ENCODE measurements at regions of chr21 and their contacts with region 1.

Region 1: GRCh38 chr21:37366482-37367316 is at the start of gene DYRK1A:
- DNase-seq: peak; percentile 98 to 100
- ATAC-seq: peak; percentile 92 to 98 (median 96)
- H3K4me3 ChIP-seq: peak within 1 kb of the TSS; percentile 74 to 98 (median 90)
- H3K27ac ChIP-seq: peak within 1 kb of the TSS; percentile 98 to 100 (median 100)
- H3K4me1 ChIP-seq: peaks cover 4 to 47% (median 43%) of the 10 kb centered on the region in 9 donors
- H3K27me3 ChIP-seq: no peaks in the 10 kb centered on the region
- CTCF ChIP-seq: peak in 1 of 9 donors; percentile 24
- total RNA-seq, gene DYRK1A: 57.6 to 94.2 (median 75.0) TPM

Region 2: DNA sequence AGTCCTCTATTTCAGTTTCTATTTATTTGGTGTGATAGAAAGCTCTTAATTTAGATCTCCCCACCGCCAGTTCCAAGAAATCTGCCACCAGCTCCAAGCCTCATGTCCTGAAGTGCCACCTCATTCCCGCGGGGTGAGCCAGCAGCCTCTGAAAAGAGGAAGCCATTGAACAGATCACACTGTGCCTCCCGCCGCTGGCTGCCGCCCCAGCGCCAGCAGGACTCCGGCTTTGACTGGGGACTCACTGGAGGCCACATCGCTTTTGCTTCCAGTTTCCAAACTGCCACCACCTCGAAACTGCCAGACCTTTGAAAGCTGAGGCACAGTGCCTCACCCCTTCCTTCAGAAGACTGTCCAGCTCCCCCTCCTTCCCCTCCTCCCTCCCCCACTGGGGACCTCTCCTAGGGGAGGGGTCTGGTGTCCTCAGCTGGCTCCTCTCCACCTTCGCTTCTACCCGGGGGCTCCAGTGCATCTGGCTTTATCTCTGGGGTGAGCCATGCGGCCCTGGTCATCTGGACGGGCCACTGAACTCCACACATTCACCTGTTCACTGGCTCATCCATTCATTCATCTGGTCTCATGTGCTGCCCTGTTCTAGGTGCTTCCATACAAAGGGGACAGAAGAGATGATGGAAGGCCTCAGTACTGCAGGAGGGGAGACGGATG is 158.5 kb before region 1 on chr21:
- intact Hi-C with region 1: loop called in 1 of 10 experiments (anchors 5 kb)
- DNase-seq: peak; percentile 79 to 84
- ATAC-seq: peak; percentile 84 to 96 (median 92)
- H3K4me3 ChIP-seq: peak overlapping the region in 7 of 10 donors; percentile 6 to 42 (median 25)
- H3K27ac ChIP-seq: peak overlapping the region; percentile 65 to 96 (median 88)
- H3K4me1 ChIP-seq: peaks cover 7 to 45% (median 23%) of the 10 kb centered on the region in 9 donors
- H3K27me3 ChIP-seq: no peaks in the 10 kb centered on the region
- CTCF ChIP-seq: no peak

Region 3: DNA sequence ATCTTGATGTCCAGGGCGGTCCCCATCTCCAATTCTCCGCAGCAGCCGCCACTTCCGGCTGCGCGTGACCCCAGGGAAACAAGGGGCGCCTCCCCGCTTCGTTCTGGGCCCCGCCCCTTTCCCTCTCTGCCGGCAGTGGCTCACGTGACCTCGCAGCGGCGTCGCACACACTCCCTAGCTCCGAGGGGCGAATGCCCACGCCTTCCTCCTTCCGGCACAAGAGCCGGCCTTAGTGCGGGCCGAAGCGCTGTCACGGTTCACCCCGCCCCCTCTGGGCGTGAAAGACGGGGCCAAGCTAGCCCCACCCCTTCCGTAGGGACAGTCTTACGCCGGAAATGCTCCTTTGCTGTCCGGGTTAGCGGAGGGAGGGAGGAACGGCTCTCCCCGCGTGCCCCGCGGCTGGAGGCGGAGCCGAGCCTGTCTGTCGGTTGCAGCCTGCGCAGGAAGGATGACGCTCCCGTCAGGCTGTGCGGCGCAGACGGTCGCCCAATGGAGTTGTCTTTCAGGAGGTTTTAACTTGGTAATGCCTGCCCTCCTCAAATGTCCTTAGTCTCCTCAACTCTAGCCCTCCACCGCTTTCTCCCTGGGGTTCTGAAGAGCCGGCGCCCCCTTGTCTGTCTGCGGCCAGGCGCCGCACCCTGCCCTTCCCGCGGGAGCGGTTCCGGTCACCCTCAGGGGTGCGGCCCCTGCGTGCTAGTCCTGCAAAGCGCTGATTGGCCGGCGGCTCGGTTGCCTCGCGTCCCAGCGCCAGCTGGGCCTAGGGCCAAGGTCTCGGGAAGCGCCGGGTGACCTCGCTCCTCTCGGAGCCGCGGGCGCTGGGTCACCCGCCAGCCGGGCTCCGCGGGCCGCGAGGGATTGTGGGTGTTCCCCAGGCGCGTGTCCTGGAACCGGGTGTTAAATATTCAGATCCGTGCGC is 99.2 kb before region 1 on chr21 and contains the start of gene VPS26C:
- intact Hi-C with region 1: loop called in 9 of 10 experiments (anchors 1 to 10 kb)
- DNase-seq: peak; percentile 98
- ATAC-seq: peak; percentile 94 to 98 (median 96)
- H3K4me3 ChIP-seq: peak within 1 kb of the TSS; percentile 59 to 93 (median 89)
- H3K27ac ChIP-seq: peak within 1 kb of the TSS; percentile 95 to 99 (median 97)
- H3K4me1 ChIP-seq: peaks cover 5 to 46% (median 35%) of the 10 kb centered on the region in 9 donors
- H3K27me3 ChIP-seq: no peaks in the 10 kb centered on the region
- CTCF ChIP-seq: no peak
- total RNA-seq, gene VPS26C: 37.6 to 57.5 (median 47.0) TPM

Region 4: GRCh38 chr21:37319551-37319950 is 47.1 kb before region 1 on chr21:
- intact Hi-C with region 1: no loop called
- DNase-seq: no peak
- ATAC-seq: no peak
- H3K4me3 ChIP-seq: no peak overlapping the region
- H3K27ac ChIP-seq: no peak overlapping the region
- H3K4me1 ChIP-seq: no peaks in the 10 kb centered on the region
- H3K27me3 ChIP-seq: no peaks in the 10 kb centered on the region
- CTCF ChIP-seq: no peak

Region 5: DNA sequence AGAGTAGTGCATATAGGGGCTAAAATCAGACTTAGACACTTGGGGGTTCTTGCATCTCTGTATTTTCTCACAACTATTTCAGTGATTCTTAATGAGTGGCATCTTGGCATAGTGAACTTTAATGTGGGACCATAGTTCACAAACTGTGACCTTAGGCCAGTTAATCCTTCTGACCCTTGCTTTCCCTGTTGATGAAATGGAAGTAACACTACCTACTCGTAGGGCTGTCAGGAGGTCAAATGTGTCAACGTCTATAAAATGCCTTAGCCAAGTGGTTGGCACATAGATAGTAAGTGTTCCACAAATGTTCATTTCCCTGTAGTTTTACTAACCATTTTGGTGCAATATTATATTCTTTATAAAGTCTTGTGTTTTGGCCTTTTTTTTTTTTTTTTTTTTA is 49.2 kb after region 1 on chr21:
- intact Hi-C with region 1: loop called in 1 of 10 experiments (anchors 5 kb)
- DNase-seq: no peak
- ATAC-seq: peak in 3 of 8 donors; percentile 33 to 51 (median 43)
- H3K4me3 ChIP-seq: no peak overlapping the region
- H3K27ac ChIP-seq: peak overlapping the region in 4 of 10 donors; percentile 15 to 62 (median 28)
- H3K4me1 ChIP-seq: peaks cover 16 to 100% (median 93%) of the 10 kb centered on the region in 9 donors
- H3K27me3 ChIP-seq: no peaks in the 10 kb centered on the region
- CTCF ChIP-seq: no peak

Region 6: DNA sequence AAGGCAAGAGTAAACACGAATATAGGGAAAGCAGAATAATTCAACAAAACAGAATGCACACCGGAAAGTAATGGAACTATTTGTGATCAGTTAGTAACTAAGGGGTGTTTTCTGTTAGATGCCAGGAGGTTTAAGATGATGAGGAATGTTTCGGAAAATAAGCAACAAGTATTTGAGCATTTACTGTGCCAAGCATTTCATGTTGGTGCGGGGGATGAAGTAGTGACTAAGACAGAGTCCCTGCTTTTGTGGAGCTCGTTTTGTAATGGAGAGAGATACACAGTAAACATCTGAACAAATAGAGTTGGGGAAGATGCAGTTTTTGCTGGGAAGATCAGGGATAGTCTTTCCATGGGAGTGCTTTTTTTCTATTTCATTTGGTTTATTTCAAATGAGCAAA is 78.5 kb after region 1 on chr21:
- intact Hi-C with region 1: loop called in 4 of 10 experiments (anchors 5 to 10 kb)
- DNase-seq: no peak
- ATAC-seq: peak in 3 of 8 donors; percentile 29 to 68 (median 36)
- H3K4me3 ChIP-seq: no peak overlapping the region
- H3K27ac ChIP-seq: peak overlapping the region in 2 of 10 donors; percentile 15 to 26
- H3K4me1 ChIP-seq: peaks cover 5 to 88% (median 73%) of the 10 kb centered on the region in 9 donors
- H3K27me3 ChIP-seq: no peaks in the 10 kb centered on the region
- CTCF ChIP-seq: no peak

Region 7: GRCh38 chr21:37463083-37463801 is 96.5 kb after region 1 on chr21:
- intact Hi-C with region 1: loop called in 7 of 10 experiments (anchors 5 to 10 kb)
- DNase-seq: no peak
- ATAC-seq: peak; percentile 28 to 72 (median 62)
- H3K4me3 ChIP-seq: peak overlapping the region in 3 of 10 donors; percentile 5 to 27 (median 16)
- H3K27ac ChIP-seq: peak overlapping the region in 3 of 10 donors; percentile 8 to 46 (median 32)
- H3K4me1 ChIP-seq: peaks cover 6 to 78% (median 69%) of the 10 kb centered on the region in 9 donors
- H3K27me3 ChIP-seq: no peaks in the 10 kb centered on the region
- CTCF ChIP-seq: peak; percentile 38 to 58 (median 50)

Region 8: GRCh38 chr21:37563641-37564340 is 197.1 kb after region 1 on chr21:
- intact Hi-C with region 1: loop called in 6 of 10 experiments (anchors 5 to 10 kb)
- DNase-seq: peak; percentile 93
- ATAC-seq: peak; percentile 94 to 98 (median 97)
- H3K4me3 ChIP-seq: peak overlapping the region; percentile 58 to 92 (median 70)
- H3K27ac ChIP-seq: peak overlapping the region; percentile 55 to 98 (median 94)
- H3K4me1 ChIP-seq: peaks cover 0 to 40% (median 26%) of the 10 kb centered on the region in 9 donors
- H3K27me3 ChIP-seq: no peaks in the 10 kb centered on the region
- CTCF ChIP-seq: peak in 7 of 9 donors; percentile 34 to 69 (median 46)